ENCODE measurements at regions of chr19 and their contacts with region 1.

Region 1: GRCh38 chr19:35468637-35469036 is 20.6 kb downstream of the FFAR2 start:
- DNase-seq: peak; percentile 82
- ATAC-seq: peak; percentile 100
- H3K4me3 ChIP-seq: no peak overlapping the region
- H3K27ac ChIP-seq: 0 out of 2 replicates have a peak overlapping the region, but pooled peaks have one; percentile 6
- H3K4me1 ChIP-seq: peaks cover 9% of the 10 kb centered on the region
- H3K27me3 ChIP-seq: no peaks in the 10 kb centered on the region
- CTCF ChIP-seq: peak; percentile 85 to 96 (median 93); a peak in 5 of 6 replicates
- EP300 ChIP-seq: peak in 1 of 2 experiments; percentile 65; a peak in 2 of 4 replicates
- POLR2A ChIP-seq: no peak
- RAD21 ChIP-seq: peak; percentile 99

Region 2: DNA sequence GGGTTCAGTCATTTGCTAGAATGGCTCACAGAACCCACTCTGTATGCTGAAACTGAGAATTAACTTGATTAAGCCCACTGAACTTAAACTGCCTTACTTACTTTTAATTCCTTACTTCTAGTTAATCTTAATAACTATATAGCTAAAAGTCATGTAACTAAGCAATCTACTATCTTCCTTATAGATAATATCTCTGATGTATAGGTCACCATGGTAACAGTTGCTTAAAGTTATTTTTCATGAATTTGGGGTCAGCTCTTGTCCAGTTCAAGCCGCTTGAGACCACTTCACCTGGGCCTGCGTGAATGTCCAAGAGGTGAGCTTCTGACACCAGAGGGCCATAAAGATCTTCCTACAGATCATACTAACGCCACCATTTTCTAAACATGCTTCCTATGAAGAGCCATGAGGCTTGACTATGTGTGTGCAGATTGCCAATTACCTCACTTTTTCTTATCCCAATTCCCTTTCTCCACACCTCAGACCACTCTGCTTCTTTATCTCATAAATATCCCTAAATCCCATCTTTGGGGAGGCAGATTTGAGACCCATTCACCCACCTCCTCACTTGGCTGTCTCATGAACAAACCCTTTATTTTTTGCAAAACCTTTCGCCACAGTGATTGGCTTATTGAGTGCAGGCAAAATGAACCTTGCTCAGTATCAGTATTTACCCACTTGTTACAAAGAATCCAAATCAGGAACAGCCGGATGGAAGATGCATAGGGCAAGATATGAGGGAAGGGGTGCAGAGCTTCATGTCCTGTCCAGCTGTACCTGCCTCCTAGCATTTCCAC is 274.6 kb before region 1 on chr19:
- CTCF ChIA-PET with region 1: no interaction called
- POLR2A ChIA-PET with region 1: no interaction called
- RAD21 ChIA-PET with region 1: no interaction called
- SMC1A ChIA-PET with region 1: no interaction called
- in situ Hi-C with region 1: no loop called
- intact Hi-C with region 1: no loop called
- DNase-seq: no peak
- ATAC-seq: peak; percentile 38; the same call in 1 of the 3 replicates
- H3K4me3 ChIP-seq: no peak overlapping the region
- H3K27ac ChIP-seq: no peak overlapping the region
- H3K4me1 ChIP-seq: no peaks in the 10 kb centered on the region
- H3K27me3 ChIP-seq: no peaks in the 10 kb centered on the region; a peak in 1 of 4 replicates
- CTCF ChIP-seq: 0 out of 6 replicates have a peak, but pooled peaks of 2 of the 3 experiments have one; percentile 9 to 22
- EP300 ChIP-seq: no peak
- POLR2A ChIP-seq: no peak
- RAD21 ChIP-seq: peak; percentile 41

Region 3: GRCh38 chr19:35269421-35270117 is 199.1 kb before region 1 on chr19:
- CTCF ChIA-PET with region 1: interaction called, 5 read pairs
- POLR2A ChIA-PET with region 1: interaction called, 3 read pairs
- RAD21 ChIA-PET with region 1: interaction called, 3 read pairs
- SMC1A ChIA-PET with region 1: interaction called, 6 read pairs
- in situ Hi-C with region 1: loop called (anchors 5 kb)
- intact Hi-C with region 1: loop called (anchors 1 kb)
- DNase-seq: peak; percentile 51
- ATAC-seq: peak; percentile 86
- H3K4me3 ChIP-seq: peak overlapping the region; percentile 71
- H3K27ac ChIP-seq: peak overlapping the region; percentile 83
- H3K4me1 ChIP-seq: peaks cover 17% of the 10 kb centered on the region
- H3K27me3 ChIP-seq: no peaks in the 10 kb centered on the region
- CTCF ChIP-seq: peak; percentile 39 to 66 (median 66)
- EP300 ChIP-seq: no peak
- POLR2A ChIP-seq: peak; percentile 71
- RAD21 ChIP-seq: peak; percentile 70

Region 4: GRCh38 chr19:35357867-35358573 is 110.6 kb before region 1 on chr19 and contains the start of gene FFAR3:
- CTCF ChIA-PET with region 1: interaction called, 168 read pairs
- POLR2A ChIA-PET with region 1: interaction called, 35 read pairs
- RAD21 ChIA-PET with region 1: interaction called, 143 read pairs
- SMC1A ChIA-PET with region 1: interaction called, 134 read pairs
- in situ Hi-C with region 1: no loop called
- intact Hi-C with region 1: no loop called
- DNase-seq: no peak
- ATAC-seq: no peak
- H3K4me3 ChIP-seq: no peak within 1 kb of the TSS
- H3K27ac ChIP-seq: no peak within 1 kb of the TSS
- H3K4me1 ChIP-seq: peaks cover 21% of the 10 kb centered on the region
- H3K27me3 ChIP-seq: 0 out of 4 replicates have a peak, but pooled peaks cover 0 to 2% of the 10 kb centered on the region in 2 experiments
- CTCF ChIP-seq: no peak
- EP300 ChIP-seq: no peak
- POLR2A ChIP-seq: no peak
- RAD21 ChIP-seq: no peak
- polyA plus RNA-seq, gene FFAR3: not detected

Region 5: DNA sequence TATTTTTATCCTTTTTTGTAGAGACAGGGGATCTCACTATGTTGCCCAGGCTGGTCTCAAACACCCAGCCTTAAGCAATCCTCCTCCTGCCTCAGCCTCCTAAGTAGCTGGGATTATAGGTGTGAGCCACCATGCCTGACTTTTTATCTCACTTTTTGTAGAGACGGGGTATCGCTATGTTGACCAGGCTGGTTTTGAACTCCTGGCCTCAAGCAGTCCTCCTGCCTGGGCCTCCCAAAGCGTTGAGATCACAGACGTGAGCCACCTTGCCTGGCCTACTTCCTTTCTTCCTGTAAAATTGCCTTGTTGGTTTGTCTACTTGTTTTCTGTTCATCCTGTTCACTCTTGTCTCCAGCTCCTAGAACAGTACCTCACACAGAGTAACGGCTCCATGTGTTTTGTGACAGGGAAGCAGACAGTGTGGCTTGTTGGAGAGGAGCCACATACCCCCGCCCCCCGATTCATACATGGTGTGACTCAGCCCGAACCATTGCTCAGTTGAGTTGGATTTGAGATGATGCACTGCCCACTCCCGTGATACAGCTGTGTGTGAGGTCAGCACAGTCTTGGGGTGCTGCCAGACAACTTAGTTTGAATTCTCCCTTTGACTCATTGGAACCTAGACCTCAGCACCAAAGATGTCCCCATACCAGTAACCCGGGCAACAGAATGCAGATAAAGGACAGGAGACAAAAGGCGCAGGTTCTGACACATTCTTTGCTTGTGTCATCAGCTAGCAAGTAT is 63.6 kb before region 1 on chr19:
- CTCF ChIA-PET with region 1: interaction called, 35 read pairs
- POLR2A ChIA-PET with region 1: interaction called, 10 read pairs
- RAD21 ChIA-PET with region 1: interaction called, 14 read pairs
- SMC1A ChIA-PET with region 1: interaction called, 70 read pairs
- in situ Hi-C with region 1: no loop called
- intact Hi-C with region 1: no loop called
- DNase-seq: peak; percentile 95
- ATAC-seq: peak; percentile 80
- H3K4me3 ChIP-seq: no peak overlapping the region
- H3K27ac ChIP-seq: peak overlapping the region; percentile 79
- H3K4me1 ChIP-seq: peaks cover 57% of the 10 kb centered on the region
- H3K27me3 ChIP-seq: no peaks in the 10 kb centered on the region
- CTCF ChIP-seq: no peak
- EP300 ChIP-seq: peak; percentile 90
- POLR2A ChIP-seq: no peak
- RAD21 ChIP-seq: no peak

Region 6: DNA sequence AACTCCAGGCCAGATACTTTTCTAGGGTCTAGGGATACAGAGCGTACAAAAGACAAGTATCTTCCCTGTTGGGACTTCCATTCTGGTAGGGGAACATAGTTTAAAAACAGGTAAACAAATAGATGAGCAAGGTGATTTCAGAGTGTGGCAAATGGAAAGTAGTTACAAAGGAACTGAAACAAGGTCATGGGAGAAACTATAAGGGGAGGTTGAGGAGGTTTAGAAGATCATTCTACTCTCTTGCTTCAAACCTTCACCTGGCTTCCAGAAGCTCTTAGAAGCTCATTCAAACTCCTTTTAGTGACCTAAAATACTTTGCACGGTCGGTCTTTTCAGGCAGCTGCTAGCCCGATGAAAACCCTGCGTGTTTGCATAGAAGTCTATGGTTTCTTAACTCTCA is 11.5 kb before region 1 on chr19:
- CTCF ChIA-PET with region 1: interaction called, 25 read pairs
- POLR2A ChIA-PET with region 1: interaction called, 35 read pairs
- RAD21 ChIA-PET with region 1: interaction called, 67 read pairs
- SMC1A ChIA-PET with region 1: interaction called, 109 read pairs
- in situ Hi-C with region 1: no loop called
- intact Hi-C with region 1: no loop called
- DNase-seq: peak; percentile 68
- ATAC-seq: peak; percentile 37
- H3K4me3 ChIP-seq: no peak overlapping the region
- H3K27ac ChIP-seq: peak overlapping the region; percentile 89
- H3K4me1 ChIP-seq: peaks cover 63% of the 10 kb centered on the region
- H3K27me3 ChIP-seq: no peaks in the 10 kb centered on the region
- CTCF ChIP-seq: no peak
- EP300 ChIP-seq: peak; percentile 19 to 48; a peak in 2 of 4 replicates
- POLR2A ChIP-seq: no peak
- RAD21 ChIP-seq: no peak